Calu3 (cell line): ENCODE measurements at regions of chr18 and their contacts with region 1.

Region 1: GRCh38 chr18:46073474-46074331 is 1.6 kb upstream of the PSTPIP2 start:
- DNase-seq: peak; percentile 72
- H3K4me3 Mint-ChIP-seq: no peak overlapping the region
- H3K27ac Mint-ChIP-seq: no peak overlapping the region
- H3K4me1 Mint-ChIP-seq: peaks cover 24% of the 10 kb centered on the region
- H3K27me3 Mint-ChIP-seq: no peaks in the 10 kb centered on the region
- CTCF ChIP-seq: peak; percentile 43

Region 2: DNA sequence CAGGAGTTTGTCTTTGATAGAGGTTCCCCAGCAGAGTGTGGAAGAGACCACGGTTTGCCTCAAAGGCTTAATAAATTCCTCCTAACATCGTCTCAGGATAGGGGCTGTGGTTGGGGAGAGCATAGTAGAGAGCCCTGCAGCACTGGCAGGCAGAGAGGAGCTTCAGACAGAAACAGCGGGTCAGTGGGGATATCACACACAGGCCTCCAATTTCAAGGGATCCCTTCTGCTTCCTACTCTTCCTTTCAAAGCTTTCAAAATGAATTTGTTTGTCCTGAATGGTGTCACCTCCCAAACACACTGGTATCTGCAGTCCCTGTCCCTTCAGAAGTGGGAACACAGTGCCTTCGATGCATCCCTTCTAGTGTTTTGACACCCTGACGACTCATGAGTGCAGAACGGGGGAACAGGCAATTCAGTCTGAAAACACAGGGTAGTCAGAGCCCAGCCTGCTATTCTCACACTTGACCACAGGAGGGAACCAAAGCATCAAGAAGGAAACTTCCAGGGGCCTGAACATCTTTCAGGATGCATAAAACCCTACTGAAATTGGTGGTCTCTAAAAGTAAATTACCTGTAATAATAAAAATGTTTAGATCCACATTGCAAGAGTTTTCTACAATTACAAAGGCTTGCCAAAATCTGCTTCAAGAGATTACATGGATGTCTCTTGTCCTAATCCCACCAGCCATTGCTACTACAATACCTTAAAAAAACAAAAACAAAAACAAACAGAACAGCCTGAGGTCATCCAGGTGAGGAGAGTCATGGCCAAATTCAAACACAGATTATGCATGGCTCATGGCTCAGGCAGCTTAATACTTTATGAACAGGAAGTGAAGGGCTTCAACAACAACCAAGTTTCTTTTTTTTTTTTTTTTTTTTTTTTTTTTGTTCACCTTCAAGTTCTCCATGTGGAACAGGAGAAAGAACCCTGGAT is 408.6 kb before region 1 on chr18:
- CTCF ChIA-PET with region 1: interaction called, 8 read pairs
- intact Hi-C with region 1: loop called (anchors 5 kb)
- DNase-seq: peak; percentile 63
- H3K4me3 Mint-ChIP-seq: no peak overlapping the region
- H3K27ac Mint-ChIP-seq: no peak overlapping the region
- H3K4me1 Mint-ChIP-seq: peaks cover 16% of the 10 kb centered on the region
- H3K27me3 Mint-ChIP-seq: peaks cover 68% of the 10 kb centered on the region
- CTCF ChIP-seq: peak; percentile 74

Region 3: DNA sequence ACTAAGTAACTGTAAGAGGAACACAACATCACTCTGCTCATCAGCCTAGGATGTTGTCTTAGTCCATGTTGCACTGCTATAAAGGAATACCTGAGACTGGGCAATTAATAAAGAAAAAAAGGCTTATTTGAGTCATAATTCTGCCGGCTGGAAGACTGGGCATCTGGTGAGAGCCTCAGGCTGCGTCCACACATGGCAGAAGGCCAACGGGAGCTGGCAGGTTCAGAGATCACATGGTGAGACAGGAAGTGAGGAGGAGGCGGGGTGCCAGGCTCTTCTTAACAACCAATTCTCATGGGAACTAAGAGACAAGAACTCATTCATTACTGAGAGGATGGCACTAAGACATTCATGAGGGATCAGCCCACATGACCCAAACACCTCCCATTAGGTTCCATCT is 153.3 kb before region 1 on chr18:
- CTCF ChIA-PET with region 1: no interaction called
- intact Hi-C with region 1: loop called (anchors 5 kb)
- DNase-seq: peak; percentile 31
- H3K4me3 Mint-ChIP-seq: no peak overlapping the region
- H3K27ac Mint-ChIP-seq: no peak overlapping the region
- H3K4me1 Mint-ChIP-seq: peaks cover 11% of the 10 kb centered on the region
- H3K27me3 Mint-ChIP-seq: no peaks in the 10 kb centered on the region
- CTCF ChIP-seq: no peak

Region 4: GRCh38 chr18:45974088-45974536 is 99.6 kb before region 1 on chr18:
- CTCF ChIA-PET with region 1: interaction called, 5 read pairs
- intact Hi-C with region 1: loop called (anchors 2 kb)
- DNase-seq: peak; percentile 62
- H3K4me3 Mint-ChIP-seq: no peak overlapping the region
- H3K27ac Mint-ChIP-seq: no peak overlapping the region
- H3K4me1 Mint-ChIP-seq: peaks cover 21% of the 10 kb centered on the region
- H3K27me3 Mint-ChIP-seq: no peaks in the 10 kb centered on the region
- CTCF ChIP-seq: peak; percentile 68

Region 5: DNA sequence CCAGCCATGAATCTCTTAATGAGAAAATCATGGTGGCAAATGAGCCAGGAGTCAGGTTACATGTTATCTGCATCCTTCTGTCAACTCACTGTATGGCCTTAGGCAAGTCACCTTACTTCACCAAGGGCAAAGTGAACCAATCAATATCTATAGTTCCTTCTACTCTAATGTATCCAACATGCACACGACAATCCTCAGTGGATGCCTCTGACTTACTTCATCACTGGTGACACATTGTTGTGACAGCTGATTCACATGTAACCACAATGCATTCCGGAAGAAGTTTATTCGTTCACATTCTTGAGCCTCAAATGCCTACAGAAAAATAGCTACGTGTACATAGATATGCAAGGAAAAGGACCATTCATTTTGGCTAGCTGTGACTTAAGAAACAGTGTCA is 80.3 kb before region 1 on chr18:
- CTCF ChIA-PET with region 1: interaction called, 5 read pairs
- intact Hi-C with region 1: loop called (anchors 5 kb)
- DNase-seq: peak; percentile 23
- H3K4me3 Mint-ChIP-seq: no peak overlapping the region
- H3K27ac Mint-ChIP-seq: peak overlapping the region; percentile 55
- H3K4me1 Mint-ChIP-seq: peaks cover 22% of the 10 kb centered on the region
- H3K27me3 Mint-ChIP-seq: no peaks in the 10 kb centered on the region
- CTCF ChIP-seq: no peak

Region 6: DNA sequence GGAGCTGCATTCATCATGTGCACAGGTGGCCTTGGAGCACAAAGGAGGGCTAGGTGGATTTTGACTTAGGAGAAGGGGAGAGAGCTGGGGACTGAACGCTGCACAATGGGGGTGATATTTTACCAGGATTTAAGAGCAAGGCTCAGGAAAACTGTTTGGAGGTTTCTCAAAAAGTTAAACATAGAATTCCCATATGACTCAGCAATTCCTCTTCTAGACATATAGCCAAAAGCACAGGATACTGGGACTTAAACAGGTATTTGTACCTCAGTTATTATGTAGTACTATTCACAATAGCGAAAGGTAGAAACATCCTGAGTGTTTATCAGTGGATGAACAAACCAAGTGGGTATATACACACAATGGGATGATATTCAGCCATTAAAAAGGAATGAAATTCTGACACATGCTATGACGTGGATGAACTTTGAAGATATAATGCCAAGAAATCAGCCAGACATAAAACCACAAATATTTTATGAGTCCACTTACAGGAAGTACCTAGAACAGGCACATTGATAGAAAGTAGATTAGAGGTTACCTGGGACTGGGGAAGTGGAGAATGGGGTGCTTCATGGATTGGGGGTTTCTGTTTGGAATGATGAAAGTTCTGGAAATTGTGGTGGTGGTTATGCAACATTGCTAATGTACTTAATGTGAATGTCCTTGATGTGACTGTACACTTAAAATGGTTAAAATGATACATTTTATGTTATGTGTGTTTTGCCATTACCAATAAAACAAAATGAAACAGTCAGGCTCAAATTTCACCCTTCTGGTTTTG is 247.4 kb after region 1 on chr18:
- CTCF ChIA-PET with region 1: no interaction called
- intact Hi-C with region 1: no loop called
- DNase-seq: no peak
- H3K4me3 Mint-ChIP-seq: peak overlapping the region; percentile 40
- H3K27ac Mint-ChIP-seq: peak overlapping the region; percentile 95
- H3K4me1 Mint-ChIP-seq: peaks cover 48% of the 10 kb centered on the region
- H3K27me3 Mint-ChIP-seq: no peaks in the 10 kb centered on the region
- CTCF ChIP-seq: no peak

Region 7: DNA sequence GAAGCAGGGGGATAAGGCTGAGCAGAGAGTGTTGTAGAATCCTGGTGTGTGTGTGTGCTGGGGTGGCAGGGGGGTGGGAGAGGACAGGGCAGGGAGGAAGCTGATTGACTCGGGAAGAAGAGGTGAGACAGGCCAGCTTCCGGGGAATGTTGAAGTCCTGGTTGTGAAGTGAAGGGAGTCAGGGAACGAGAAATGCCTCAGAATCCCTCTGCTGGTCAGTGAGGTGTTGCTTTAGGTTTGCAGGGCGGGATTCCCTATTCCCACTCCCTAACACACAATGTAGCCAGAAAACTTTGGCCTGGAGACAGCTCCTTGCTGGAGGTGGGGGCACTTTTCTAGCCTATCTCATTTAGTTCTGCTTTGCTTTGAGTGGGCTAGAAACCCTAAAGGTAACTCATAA is 295.6 kb after region 1 on chr18:
- CTCF ChIA-PET with region 1: no interaction called
- intact Hi-C with region 1: no loop called
- DNase-seq: no peak
- H3K4me3 Mint-ChIP-seq: no peak overlapping the region
- H3K27ac Mint-ChIP-seq: no peak overlapping the region
- H3K4me1 Mint-ChIP-seq: no peaks in the 10 kb centered on the region
- H3K27me3 Mint-ChIP-seq: peaks cover 47% of the 10 kb centered on the region
- CTCF ChIP-seq: no peak

Region 8: DNA sequence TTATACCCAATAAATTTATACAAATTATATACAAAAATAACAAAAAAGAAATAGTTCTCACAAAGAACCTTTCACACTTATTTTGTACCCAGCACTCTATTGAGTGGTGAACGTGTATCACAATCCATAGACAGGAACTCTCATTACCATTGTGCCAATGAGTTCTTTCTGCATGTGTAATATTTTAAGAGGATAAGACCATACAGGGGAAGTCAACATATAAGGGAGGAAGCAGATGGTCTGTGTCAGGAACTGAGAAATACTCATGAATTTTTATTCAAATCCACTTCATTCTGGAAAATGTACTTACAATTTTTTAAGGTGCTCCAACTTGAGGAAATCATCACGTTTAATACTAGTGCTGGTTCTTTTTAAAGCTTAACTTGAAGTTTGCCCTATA is 988.8 kb after region 1 on chr18:
- CTCF ChIA-PET with region 1: no interaction called
- intact Hi-C with region 1: no loop called
- DNase-seq: no peak
- H3K4me3 Mint-ChIP-seq: no peak overlapping the region
- H3K27ac Mint-ChIP-seq: no peak overlapping the region
- H3K4me1 Mint-ChIP-seq: no peaks in the 10 kb centered on the region
- H3K27me3 Mint-ChIP-seq: no peaks in the 10 kb centered on the region
- CTCF ChIP-seq: no peak